Esophagus muscularis mucosa (tissue), 4 donors: ENCODE measurements at regions of chr14 and their contacts with region 1.

Region 1: GRCh38 chr14:60091550-60092530 is at the start of gene PCNX4:
- DNase-seq: peak; percentile 99
- H3K4me3 ChIP-seq: peak within 1 kb of the TSS; percentile 72 to 84 (median 77)
- H3K27ac ChIP-seq: peak within 1 kb of the TSS; percentile 94 to 98 (median 96)
- H3K4me1 ChIP-seq: peaks cover 32 to 47% (median 44%) of the 10 kb centered on the region in 4 donors
- H3K27me3 ChIP-seq: no peaks in the 10 kb centered on the region
- CTCF ChIP-seq: no peak
- EP300 ChIP-seq: peak; percentile 75
- POLR2A ChIP-seq: peak; percentile 68
- total RNA-seq, gene PCNX4: 18.7 to 34.5 (median 26.3) TPM

Region 2: GRCh38 chr14:59422069-59422881 is 669.6 kb before region 1 on chr14:
- intact Hi-C with region 1: no loop called
- DNase-seq: no peak
- H3K4me3 ChIP-seq: no peak overlapping the region
- H3K27ac ChIP-seq: peak overlapping the region in 1 of 4 donors; percentile 33
- H3K4me1 ChIP-seq: peaks cover 23 to 59% (median 50%) of the 10 kb centered on the region in 4 donors
- H3K27me3 ChIP-seq: no peaks in the 10 kb centered on the region
- CTCF ChIP-seq: no peak
- EP300 ChIP-seq: no peak
- POLR2A ChIP-seq: no peak

Region 3: DNA sequence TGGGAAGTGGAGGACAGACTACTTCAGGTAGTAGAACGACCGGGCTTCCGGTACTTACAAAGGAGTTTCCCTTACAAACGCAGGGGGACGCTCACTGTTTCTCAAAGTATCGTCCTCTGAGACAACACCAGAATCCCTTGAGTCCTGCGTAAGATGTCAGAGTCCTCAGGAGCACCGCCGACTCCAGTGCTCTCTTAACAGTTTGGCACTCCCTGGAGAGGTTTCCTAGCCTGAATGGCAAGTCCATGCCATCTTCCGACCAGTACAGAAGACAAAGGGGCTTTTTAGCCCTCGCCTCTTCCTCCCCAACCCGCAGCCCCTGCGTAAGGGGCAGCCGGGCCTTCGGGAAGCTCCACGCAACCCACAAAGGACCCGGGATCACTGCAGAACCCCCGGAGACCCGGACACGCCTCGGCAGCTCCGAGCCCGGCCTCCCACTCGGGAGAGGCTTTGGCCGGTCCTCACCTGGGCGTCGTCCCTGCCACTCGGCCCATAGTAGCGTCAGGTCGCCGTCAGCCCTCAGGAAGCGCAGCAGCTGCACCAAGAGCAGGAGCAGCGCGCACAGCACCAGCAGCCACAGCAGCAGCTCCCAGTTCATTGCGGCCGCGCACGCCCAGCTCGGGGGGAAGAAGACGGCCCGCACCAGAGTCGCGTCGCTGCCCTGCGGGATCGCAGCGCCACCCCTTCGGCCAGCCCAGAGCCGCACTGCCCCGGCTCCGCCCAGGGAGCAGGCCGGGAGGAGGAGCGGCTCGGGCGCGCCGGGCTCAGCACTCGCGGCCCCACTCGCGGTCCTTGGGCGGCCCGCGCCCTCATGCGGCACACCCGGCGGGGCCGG is 73.1 kb after region 1 on chr14 and contains the start of gene DHRS7:
- intact Hi-C with region 1: loop called (anchors 2 kb)
- DNase-seq: peak; percentile 94
- H3K4me3 ChIP-seq: peak within 1 kb of the TSS; percentile 67 to 95 (median 76)
- H3K27ac ChIP-seq: peak within 1 kb of the TSS; percentile 87 to 97 (median 91)
- H3K4me1 ChIP-seq: peaks cover 14 to 40% (median 24%) of the 10 kb centered on the region in 4 donors
- H3K27me3 ChIP-seq: no peaks in the 10 kb centered on the region
- CTCF ChIP-seq: peak; percentile 62 to 69 (median 69)
- EP300 ChIP-seq: no peak
- POLR2A ChIP-seq: peak; percentile 62
- total RNA-seq, gene DHRS7: 46.1 to 70.5 (median 59.5) TPM

Region 4: GRCh38 chr14:60248697-60249318 is 157.0 kb after region 1 on chr14 and contains the start of gene PPM1A:
- intact Hi-C with region 1: loop called (anchors 5 kb)
- DNase-seq: peak; percentile 98
- H3K4me3 ChIP-seq: peak within 1 kb of the TSS; percentile 82 to 97 (median 92)
- H3K27ac ChIP-seq: peak within 1 kb of the TSS; percentile 98 to 100 (median 98)
- H3K4me1 ChIP-seq: peaks cover 26 to 48% (median 41%) of the 10 kb centered on the region in 4 donors
- H3K27me3 ChIP-seq: no peaks in the 10 kb centered on the region
- CTCF ChIP-seq: no peak
- EP300 ChIP-seq: no peak
- POLR2A ChIP-seq: peak; percentile 86
- total RNA-seq, gene PPM1A: 40.4 to 60.2 (median 53.6) TPM